GM12878 (cell line): ENCODE measurements at regions of chr4 and their contacts with region 1.

Region 1: DNA sequence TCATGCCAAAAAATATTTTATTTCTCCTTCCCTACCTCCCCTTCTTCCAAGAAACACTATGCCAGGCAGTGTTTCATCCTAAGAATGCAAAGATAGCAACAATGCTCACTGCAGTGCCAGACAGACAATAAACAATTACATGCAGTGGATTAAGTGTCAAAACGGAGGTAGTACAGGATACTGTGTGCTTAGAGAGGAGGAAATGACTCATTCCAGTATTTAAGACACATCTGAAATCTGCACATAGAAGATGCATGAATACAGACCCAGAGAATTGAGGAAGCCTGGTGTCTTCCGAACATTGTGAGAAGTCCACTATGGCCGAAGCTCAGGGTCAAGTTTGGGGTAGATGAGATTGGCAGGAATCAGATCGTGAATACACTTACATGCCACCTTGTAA is 326.4 kb downstream of the PPP3CA start:
- DNase-seq: peak; percentile 53
- ATAC-seq: peak; percentile 72
- H3K4me3 ChIP-seq: 0 out of 2 replicates have a peak overlapping the region, but pooled peaks have one; percentile 5
- H3K27ac ChIP-seq: no peak overlapping the region
- H3K4me1 ChIP-seq: peaks cover 49% of the 10 kb centered on the region
- H3K27me3 ChIP-seq: no peaks in the 10 kb centered on the region
- CTCF ChIP-seq: no peak
- EP300 ChIP-seq: peak in 1 of 2 experiments; percentile 31; a peak in 1 of 4 replicates
- POLR2A ChIP-seq: no peak
- RAD21 ChIP-seq: no peak

Region 2: DNA sequence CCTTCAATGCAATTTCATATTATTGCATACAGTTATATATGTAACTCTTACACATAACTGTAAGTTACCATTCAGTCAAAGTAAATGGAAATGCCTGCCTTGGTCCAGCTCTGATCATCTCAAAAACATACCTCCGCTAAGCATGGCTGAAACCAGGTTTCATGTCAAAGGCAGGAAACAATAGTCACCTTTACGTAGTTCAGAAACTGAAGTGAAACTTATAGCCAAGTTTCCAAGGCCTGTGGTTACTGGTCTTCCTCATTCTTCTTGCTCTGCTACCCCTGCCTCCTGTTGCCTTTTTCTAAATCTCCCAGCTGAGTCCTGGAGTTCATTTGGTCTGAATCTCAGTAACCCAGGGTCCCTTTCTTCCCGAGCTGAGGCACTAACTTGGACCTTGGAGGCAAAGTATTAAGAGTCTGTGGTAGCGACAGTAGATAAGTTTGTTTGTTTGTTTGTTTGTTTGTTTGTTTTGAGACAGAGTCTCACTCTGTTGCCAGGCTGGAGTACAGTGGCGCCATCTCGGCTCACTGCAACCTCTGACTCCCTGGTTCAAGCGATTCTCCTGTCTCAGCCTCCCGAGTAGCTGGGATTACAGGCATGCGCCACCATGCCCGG is 1173.5 kb before region 1 on chr4:
- CTCF ChIA-PET with region 1: no interaction called
- POLR2A ChIA-PET with region 1: no interaction called
- RAD21 ChIA-PET with region 1: no interaction called
- SMC1A ChIA-PET with region 1: no interaction called
- in situ Hi-C with region 1: loop called (anchors 25 kb)
- intact Hi-C with region 1: no loop called
- DNase-seq: peak; percentile 87
- ATAC-seq: peak; percentile 61
- H3K4me3 ChIP-seq: peak overlapping the region; percentile 48; the same call in 1 of the 2 replicates
- H3K27ac ChIP-seq: peak overlapping the region; percentile 94
- H3K4me1 ChIP-seq: peaks cover 63% of the 10 kb centered on the region
- H3K27me3 ChIP-seq: no peaks in the 10 kb centered on the region
- CTCF ChIP-seq: no peak
- EP300 ChIP-seq: peak; percentile 94 to 99
- POLR2A ChIP-seq: no peak
- RAD21 ChIP-seq: no peak

Region 3: GRCh38 chr4:100828986-100829685 is 191.8 kb before region 1 on chr4:
- CTCF ChIA-PET with region 1: no interaction called
- POLR2A ChIA-PET with region 1: interaction called, 4 read pairs
- RAD21 ChIA-PET with region 1: interaction called, 5 read pairs
- SMC1A ChIA-PET with region 1: interaction called, 10 read pairs
- in situ Hi-C with region 1: loop called (anchors 10 kb)
- intact Hi-C with region 1: no loop called
- DNase-seq: no peak
- ATAC-seq: no peak
- H3K4me3 ChIP-seq: no peak overlapping the region
- H3K27ac ChIP-seq: no peak overlapping the region
- H3K4me1 ChIP-seq: peaks cover 5% of the 10 kb centered on the region
- H3K27me3 ChIP-seq: no peaks in the 10 kb centered on the region
- CTCF ChIP-seq: no peak
- EP300 ChIP-seq: no peak
- POLR2A ChIP-seq: no peak
- RAD21 ChIP-seq: no peak

Region 4: DNA sequence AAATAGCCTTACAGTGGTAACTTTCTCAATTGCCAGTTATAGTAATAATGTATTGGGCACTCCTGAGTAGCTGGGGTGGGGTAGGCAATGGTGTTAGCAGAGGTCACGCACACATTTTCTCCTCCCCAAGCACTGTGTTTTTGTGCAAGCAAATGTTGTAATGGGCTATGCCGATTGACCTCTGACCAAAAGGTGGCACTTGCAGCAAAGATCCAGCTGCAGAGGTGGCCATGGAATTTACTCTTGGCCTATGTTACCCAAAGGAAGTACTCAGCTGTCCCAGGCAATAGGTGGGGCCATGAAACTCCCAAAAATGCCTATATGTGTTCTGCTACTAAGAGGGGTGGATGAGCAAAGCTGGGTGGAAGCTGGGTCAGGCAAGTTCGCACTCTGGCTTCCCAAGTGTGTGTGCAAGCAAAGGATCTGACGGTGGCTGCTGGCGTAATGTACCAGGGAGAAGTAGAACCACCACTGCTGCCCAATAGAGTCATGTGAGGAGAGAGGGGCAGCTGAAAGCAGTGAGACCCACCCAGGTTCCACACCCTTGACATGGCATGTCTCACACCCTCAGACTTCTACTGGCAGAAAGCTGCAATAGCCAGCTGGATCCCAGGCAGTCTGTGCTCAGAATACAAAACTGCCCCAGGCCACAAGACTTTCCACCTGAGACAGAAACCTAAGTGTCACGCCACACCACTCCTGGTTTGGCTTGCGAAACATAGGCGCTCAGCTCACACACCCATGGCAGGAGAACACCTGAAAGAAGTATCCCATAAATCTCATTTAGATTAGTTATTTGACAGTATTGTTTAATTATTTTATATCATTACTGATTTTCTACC is 149.8 kb before region 1 on chr4:
- CTCF ChIA-PET with region 1: no interaction called
- POLR2A ChIA-PET with region 1: no interaction called
- RAD21 ChIA-PET with region 1: no interaction called
- SMC1A ChIA-PET with region 1: no interaction called
- in situ Hi-C with region 1: no loop called
- intact Hi-C with region 1: no loop called
- DNase-seq: no peak
- ATAC-seq: no peak
- H3K4me3 ChIP-seq: no peak overlapping the region
- H3K27ac ChIP-seq: no peak overlapping the region
- H3K4me1 ChIP-seq: no peaks in the 10 kb centered on the region
- H3K27me3 ChIP-seq: no peaks in the 10 kb centered on the region
- CTCF ChIP-seq: no peak
- EP300 ChIP-seq: no peak
- POLR2A ChIP-seq: no peak
- RAD21 ChIP-seq: no peak

Region 5: GRCh38 chr4:101155368-101155767 is 134.4 kb after region 1 on chr4:
- CTCF ChIA-PET with region 1: no interaction called
- POLR2A ChIA-PET with region 1: no interaction called
- RAD21 ChIA-PET with region 1: interaction called, 3 read pairs
- SMC1A ChIA-PET with region 1: no interaction called
- in situ Hi-C with region 1: no loop called
- intact Hi-C with region 1: loop called (anchors 5 kb)
- DNase-seq: no peak
- ATAC-seq: no peak
- H3K4me3 ChIP-seq: no peak overlapping the region
- H3K27ac ChIP-seq: no peak overlapping the region
- H3K4me1 ChIP-seq: peaks cover 13% of the 10 kb centered on the region
- H3K27me3 ChIP-seq: no peaks in the 10 kb centered on the region
- CTCF ChIP-seq: no peak
- EP300 ChIP-seq: no peak
- POLR2A ChIP-seq: no peak
- RAD21 ChIP-seq: no peak

Region 6: GRCh38 chr4:101347557-101348366 is 326.8 kb after region 1 on chr4:
- CTCF ChIA-PET with region 1: no interaction called
- POLR2A ChIA-PET with region 1: no interaction called
- RAD21 ChIA-PET with region 1: no interaction called
- SMC1A ChIA-PET with region 1: no interaction called
- in situ Hi-C with region 1: no loop called
- intact Hi-C with region 1: loop called (anchors 5 kb)
- DNase-seq: peak; percentile 83
- ATAC-seq: peak; percentile 91
- H3K4me3 ChIP-seq: peak overlapping the region; percentile 90
- H3K27ac ChIP-seq: peak overlapping the region; percentile 47
- H3K4me1 ChIP-seq: peaks cover 10% of the 10 kb centered on the region
- H3K27me3 ChIP-seq: peaks cover 1 to 4% of the 10 kb centered on the region in 2 experiments; a peak in 1 of 4 replicates
- CTCF ChIP-seq: no peak
- EP300 ChIP-seq: no peak
- POLR2A ChIP-seq: peak; percentile 80
- RAD21 ChIP-seq: no peak